ENCODE measurements at regions of chr12 and their contacts with region 1.

Region 1: GRCh38 chr12:10364815-10365622 is 24.8 kb downstream of the KLRK1 start:
- DNase-seq: peak; percentile 72
- H3K4me3 Mint-ChIP-seq: no peak overlapping the region
- H3K27ac Mint-ChIP-seq: no peak overlapping the region
- H3K4me1 Mint-ChIP-seq: peaks cover 49% of the 10 kb centered on the region
- H3K27me3 Mint-ChIP-seq: no peaks in the 10 kb centered on the region
- CTCF ChIP-seq: no peak

Region 2: GRCh38 chr12:10331642-10332239 is 33.3 kb before region 1 on chr12:
- CTCF ChIA-PET with region 1: interaction called, 7 read pairs
- intact Hi-C with region 1: loop called (anchors 2 kb)
- DNase-seq: peak; percentile 28
- H3K4me3 Mint-ChIP-seq: no peak overlapping the region
- H3K27ac Mint-ChIP-seq: no peak overlapping the region
- H3K4me1 Mint-ChIP-seq: peaks cover 17% of the 10 kb centered on the region
- H3K27me3 Mint-ChIP-seq: no peaks in the 10 kb centered on the region
- CTCF ChIP-seq: peak; percentile 53

Region 3: GRCh38 chr12:10395390-10395998 is 30.5 kb after region 1 on chr12:
- CTCF ChIA-PET with region 1: interaction called, 4 read pairs
- intact Hi-C with region 1: loop called (anchors 2 kb)
- DNase-seq: peak; percentile 51
- H3K4me3 Mint-ChIP-seq: peak overlapping the region; percentile 58
- H3K27ac Mint-ChIP-seq: peak overlapping the region; percentile 97
- H3K4me1 Mint-ChIP-seq: peaks cover 32% of the 10 kb centered on the region
- H3K27me3 Mint-ChIP-seq: no peaks in the 10 kb centered on the region
- CTCF ChIP-seq: no peak

Region 4: DNA sequence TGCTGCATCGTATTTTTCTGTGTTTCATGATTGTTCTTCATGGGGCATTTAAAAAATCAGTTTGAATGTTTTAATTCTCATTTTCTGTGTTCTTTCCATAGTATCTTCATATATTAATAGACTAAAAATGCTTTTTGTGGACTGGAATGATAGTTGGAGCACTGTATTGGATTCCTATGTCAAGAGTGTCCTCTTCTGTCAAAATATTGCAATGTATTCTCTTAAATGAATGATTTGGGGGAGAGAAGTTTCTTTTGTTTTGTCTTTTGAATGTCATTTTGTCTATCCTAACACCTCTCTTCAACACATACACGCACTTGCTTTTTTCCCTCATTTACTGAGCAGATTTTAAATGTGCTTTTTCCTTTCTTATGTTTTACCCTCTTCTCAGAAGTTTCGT is 136.0 kb after region 1 on chr12:
- CTCF ChIA-PET with region 1: no interaction called
- intact Hi-C with region 1: loop called (anchors 1 kb)
- DNase-seq: no peak
- H3K4me3 Mint-ChIP-seq: no peak overlapping the region
- H3K27ac Mint-ChIP-seq: no peak overlapping the region
- H3K4me1 Mint-ChIP-seq: no peaks in the 10 kb centered on the region
- H3K27me3 Mint-ChIP-seq: no peaks in the 10 kb centered on the region
- CTCF ChIP-seq: no peak

Region 5: GRCh38 chr12:10562306-10562933 is 197.4 kb after region 1 on chr12:
- CTCF ChIA-PET with region 1: interaction called, 6 read pairs
- intact Hi-C with region 1: loop called (anchors 1 kb)
- DNase-seq: peak; percentile 45
- H3K4me3 Mint-ChIP-seq: no peak overlapping the region
- H3K27ac Mint-ChIP-seq: no peak overlapping the region
- H3K4me1 Mint-ChIP-seq: no peaks in the 10 kb centered on the region
- H3K27me3 Mint-ChIP-seq: no peaks in the 10 kb centered on the region
- CTCF ChIP-seq: peak; percentile 63